Activated naive CD4-positive, alpha-beta T cell treated with anti-CD3 and anti-CD28 coated beads for 36 hours (primary cell): ENCODE measurements at regions of chr14 and their contacts with region 1.

Region 1: DNA sequence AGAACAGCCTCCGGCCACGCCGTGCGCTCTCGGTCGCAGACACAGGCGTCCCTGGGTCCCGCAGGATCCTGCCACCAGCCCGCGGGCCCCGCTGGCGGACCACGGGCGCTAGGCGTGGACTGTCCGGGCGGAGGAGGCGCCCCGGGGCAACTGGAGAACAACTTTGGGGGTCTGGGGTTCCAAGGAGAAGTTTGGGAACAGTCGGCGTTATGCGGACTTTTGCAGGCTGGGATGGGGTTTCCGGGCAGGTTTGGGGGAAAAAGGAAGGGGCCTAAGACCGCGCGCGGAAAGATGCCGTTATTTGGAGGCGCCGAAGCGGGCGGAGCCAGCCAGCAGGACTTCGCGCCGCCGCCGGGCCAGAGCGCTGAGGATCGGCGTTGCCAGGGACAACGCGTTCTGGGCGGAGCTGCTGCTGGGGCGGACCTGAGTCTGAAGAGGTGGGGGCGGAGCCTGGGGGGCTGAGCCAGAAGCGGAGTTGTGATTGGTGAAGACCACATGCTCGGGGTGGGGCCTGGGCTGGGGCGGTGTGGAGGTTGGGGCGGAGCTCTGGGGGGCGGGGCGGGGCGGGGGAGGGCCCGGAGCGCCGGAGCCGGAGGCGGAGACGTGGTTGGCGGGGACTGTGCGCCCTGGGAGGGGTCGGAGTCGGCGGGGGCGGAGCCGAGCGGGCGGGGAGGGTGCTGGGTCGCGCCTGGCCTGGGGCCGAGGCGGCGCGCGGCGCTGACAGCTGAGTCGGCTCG is at the start of gene CYP46A1:
- DNase-seq: peak; percentile 100
- H3K4me3 Mint-ChIP-seq: peak within 1 kb of the TSS; percentile 87
- H3K27ac Mint-ChIP-seq: peak within 1 kb of the TSS; percentile 66
- H3K4me1 Mint-ChIP-seq: peaks cover 3% of the 10 kb centered on the region
- H3K27me3 Mint-ChIP-seq: peaks cover 4% of the 10 kb centered on the region
- total RNA-seq, gene CYP46A1: 0.10 to 0.12 TPM

Region 2: DNA sequence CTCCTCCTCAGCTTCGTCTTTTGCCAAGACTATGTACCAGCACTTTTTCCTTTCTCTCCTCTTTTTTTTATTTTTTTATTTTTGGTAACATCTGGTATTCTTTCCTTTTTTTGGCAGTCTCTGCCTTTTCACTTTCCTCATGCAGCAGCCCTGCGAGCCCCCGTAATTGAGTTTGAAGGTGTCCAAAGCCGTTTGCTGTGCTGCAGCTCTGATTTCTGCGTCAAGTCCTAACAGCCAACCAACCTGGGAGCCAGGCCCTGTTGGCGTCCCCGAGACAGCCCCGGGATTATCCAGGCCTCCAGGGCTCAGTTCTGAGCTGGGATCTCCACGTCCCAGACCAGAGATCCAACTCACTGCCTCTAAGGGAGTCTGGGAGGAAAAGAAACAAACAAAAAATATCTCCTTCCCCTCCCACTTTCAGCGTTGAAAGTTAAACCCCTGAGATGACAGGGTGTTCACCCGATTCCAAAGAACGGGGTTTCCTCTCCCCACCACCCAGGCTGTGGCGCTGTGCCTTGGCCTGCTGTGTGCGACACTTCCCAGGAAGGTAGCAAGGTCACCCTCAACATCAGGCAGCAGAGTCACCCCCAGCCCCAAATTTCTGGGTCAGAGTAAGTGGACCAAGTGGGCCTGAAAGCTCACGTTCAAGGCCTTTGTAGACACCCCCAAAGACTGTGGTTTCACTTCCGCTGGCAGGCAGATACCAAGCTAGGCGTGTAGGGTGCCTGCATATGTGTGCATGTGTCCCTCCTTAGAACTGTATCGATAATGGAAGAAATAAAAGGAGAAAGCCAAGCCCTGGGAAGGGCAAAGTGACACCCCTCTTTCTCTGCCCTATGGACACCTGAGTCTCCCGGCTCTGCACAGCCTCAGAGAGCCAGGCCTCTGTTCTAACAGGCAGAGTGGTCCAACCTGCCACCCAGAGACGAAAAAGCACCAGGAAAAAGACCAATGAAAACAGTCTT is 422.9 kb before region 1 on chr14:
- CTCF ChIA-PET with region 1: no interaction called
- intact Hi-C with region 1: no loop called
- DNase-seq: peak; percentile 72
- H3K4me3 Mint-ChIP-seq: peak overlapping the region; percentile 96
- H3K27ac Mint-ChIP-seq: peak overlapping the region; percentile 95
- H3K4me1 Mint-ChIP-seq: peaks cover 84% of the 10 kb centered on the region
- H3K27me3 Mint-ChIP-seq: no peaks in the 10 kb centered on the region

Region 3: DNA sequence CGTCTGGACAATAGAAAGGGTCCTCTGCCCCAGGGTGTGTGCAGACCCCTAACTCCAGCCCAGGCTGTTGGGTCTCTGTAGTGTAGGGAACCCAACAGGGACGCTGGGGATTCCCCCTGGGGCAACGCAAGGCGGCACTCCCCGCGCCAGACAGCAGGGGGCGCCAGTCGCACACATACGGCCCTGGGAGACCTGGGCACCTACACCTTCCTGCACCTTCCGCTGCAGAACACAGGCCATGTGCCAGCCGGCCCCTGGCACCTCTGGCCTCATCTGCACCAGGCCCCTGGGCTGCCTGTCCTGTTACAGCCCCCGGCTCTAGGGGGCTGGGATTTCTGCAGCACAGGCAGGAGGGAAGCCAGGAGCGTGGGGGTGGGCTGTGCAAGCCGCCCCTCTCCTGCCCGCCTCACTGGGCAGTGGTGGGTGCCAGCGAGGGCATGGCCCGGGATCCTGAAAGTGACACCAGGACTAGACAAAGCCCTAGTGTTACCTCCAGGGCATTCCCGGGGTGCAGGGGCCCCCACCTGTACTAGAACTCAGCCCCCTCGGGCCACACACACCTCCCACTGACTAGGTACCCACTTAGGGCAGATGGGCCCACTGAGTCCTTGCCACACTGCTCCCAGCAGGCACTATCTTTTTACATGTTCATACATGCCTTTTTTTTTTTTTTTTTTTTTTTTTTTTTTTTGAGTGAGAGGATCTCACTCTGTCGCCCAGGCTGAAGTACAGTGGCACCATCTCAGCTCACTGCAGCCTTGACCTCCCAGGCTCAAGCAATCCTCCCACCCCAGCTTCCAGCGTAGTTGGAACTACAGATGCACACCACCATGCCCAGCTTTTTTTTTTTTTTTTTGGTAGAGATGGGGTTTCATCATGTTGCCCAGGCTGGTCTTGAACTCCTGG is 165.1 kb before region 1 on chr14:
- CTCF ChIA-PET with region 1: no interaction called
- intact Hi-C with region 1: loop called (anchors 2 kb)
- DNase-seq: peak; percentile 89
- H3K4me3 Mint-ChIP-seq: no peak overlapping the region
- H3K27ac Mint-ChIP-seq: no peak overlapping the region
- H3K4me1 Mint-ChIP-seq: no peaks in the 10 kb centered on the region
- H3K27me3 Mint-ChIP-seq: no peaks in the 10 kb centered on the region

Region 4: DNA sequence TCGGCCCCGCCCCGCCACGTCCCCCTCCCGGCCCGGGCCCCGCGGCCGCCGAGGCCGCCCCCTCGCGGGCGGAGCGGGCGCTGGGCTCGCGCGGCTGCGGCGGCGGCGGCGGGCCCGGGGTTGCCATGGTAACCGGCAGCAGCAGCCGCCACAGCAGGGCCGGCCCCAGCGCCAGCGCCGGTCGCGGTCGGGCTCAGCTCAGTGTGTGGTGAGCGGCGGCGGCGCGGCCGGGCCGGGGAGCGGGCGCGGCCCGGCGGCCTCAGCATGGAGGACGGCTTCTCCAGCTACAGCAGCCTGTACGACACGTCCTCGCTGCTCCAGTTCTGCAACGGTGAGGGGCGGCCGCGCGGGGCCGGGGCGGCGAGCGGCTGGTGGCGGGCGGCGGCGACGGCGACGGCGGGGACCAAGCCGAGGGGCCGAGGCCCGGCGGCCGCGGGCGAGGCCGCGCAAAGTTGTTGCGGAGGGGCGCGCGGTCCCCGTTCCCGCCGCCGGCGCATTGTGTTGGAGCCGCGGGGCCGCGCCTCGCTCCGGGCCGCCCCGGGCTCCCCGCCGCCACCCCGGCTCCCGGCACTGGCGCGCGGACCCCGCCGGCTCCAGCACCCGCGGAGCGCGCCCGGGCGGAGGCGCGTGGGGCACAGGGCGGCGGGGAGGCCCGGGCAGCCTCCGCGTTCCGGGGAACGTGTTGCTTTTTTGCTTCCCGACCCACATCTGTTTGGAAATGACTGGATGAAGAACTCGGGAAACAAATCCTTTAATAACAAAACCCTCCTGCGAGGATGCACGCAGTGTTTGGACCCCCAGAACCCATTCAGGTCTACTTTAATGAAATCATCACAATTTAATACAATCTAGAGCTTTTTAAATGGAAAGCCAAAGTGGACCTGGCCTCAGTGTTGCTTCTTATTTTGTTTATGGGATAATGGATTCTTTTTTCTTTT is 109.7 kb after region 1 on chr14 and contains the start of gene EML1:
- CTCF ChIA-PET with region 1: interaction called, 5 read pairs
- intact Hi-C with region 1: loop called (anchors 2 kb)
- DNase-seq: peak; percentile 77
- H3K4me3 Mint-ChIP-seq: peak within 1 kb of the TSS; percentile 58
- H3K27ac Mint-ChIP-seq: peak within 1 kb of the TSS; percentile 15
- H3K4me1 Mint-ChIP-seq: peaks cover 21% of the 10 kb centered on the region
- H3K27me3 Mint-ChIP-seq: peaks cover 14% of the 10 kb centered on the region
- total RNA-seq, gene EML1: 0.91 to 1.2 TPM

Region 5: DNA sequence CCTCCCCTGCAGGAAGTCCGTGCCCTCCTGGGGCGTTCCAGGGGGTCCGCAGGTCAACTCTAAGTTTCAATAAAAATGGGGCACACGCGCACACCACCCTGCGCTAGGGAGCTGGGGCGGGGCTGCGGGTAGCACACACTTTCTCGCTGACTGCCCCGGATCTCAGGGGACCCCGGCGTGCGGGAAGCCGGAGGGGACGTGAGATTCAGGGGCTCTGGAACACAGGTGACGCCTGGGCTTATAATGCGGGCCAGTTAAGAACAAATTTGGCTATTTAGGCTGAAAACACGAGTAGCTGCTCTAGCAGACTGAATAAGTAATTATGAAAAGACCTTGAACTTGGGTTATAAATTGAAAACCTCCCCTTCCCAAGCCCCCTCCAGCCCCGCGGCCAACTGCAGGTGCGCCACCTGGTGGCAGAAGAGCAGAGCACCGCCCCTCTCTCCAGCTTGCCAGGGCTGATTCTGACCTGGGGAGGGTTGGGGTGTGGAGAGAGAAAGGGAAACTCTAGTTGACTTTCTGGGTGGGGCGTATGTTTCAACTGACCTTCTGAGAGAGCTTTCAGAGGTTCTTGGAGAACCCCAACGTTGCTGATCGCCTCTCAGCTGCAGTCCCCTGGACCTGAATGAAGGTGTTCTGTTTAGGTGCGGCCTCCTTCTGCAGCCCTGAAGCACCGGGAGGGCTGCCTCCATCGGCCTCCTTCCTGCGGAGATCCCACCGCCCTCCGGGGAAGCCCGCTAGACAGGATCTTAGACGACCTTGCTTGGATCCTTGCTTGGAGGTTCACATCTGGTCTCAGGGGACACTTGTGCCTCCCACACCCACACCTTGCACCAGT is 263.1 kb after region 1 on chr14:
- CTCF ChIA-PET with region 1: no interaction called
- intact Hi-C with region 1: loop called (anchors 5 kb)
- DNase-seq: peak; percentile 64
- H3K4me3 Mint-ChIP-seq: no peak overlapping the region
- H3K27ac Mint-ChIP-seq: no peak overlapping the region
- H3K4me1 Mint-ChIP-seq: peaks cover 21% of the 10 kb centered on the region
- H3K27me3 Mint-ChIP-seq: peaks cover 16% of the 10 kb centered on the region